Heart right ventricle (tissue), 16 donors: ENCODE measurements at regions of chr9 and their contacts with region 1.

Region 1: DNA sequence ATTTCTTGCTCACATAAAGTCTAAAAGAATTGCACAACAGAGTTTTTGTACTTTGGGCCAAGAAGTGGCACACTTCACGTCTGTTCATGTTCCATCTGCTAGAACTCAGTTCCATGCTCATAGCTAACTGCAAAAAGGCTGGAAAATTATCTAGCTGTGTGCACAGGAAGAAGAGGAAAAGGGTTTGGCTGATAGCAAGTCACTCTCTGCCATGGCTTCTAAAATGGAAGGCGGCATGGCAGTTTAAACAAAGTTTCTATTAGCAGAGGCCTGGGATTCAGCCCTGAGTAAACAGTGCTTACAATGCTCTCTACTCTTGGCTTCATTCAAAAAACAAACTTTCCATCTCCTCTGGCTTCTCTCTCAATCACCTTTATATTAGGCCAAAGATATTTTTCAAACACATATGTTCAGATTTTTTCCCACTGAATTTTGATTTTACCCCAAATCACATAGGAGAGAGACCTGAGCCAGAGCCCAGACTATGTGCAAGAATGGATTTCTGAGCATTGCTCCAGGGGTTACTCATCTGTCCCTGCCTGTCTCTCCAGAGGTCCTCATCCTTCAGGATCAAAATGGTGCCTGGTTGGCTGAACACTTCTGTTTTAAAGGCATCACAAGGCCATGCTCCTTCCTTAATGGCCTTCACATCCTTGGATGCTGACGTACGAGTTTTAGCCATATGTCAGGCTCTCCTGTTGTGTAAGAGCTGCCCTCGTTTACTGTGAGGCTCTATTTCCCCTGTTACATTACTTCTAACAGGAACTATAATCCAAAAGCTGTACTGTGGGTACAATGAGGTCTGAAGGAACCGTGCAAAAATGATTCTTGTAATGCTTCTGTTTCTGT is 226.6 kb downstream of the SAXO1 start:
- DNase-seq: no peak
- ATAC-seq: no peak
- H3K4me3 ChIP-seq: no peak overlapping the region
- H3K27ac ChIP-seq: no peak overlapping the region
- H3K4me1 ChIP-seq: no peaks in the 10 kb centered on the region
- H3K27me3 ChIP-seq: no peaks in the 10 kb centered on the region
- CTCF ChIP-seq: no peak

Region 2: GRCh38 chr9:18459958-18460584 is 346.4 kb before region 1 on chr9:
- intact Hi-C with region 1: loop called in 1 of 10 experiments (anchors 10 kb)
- DNase-seq: no peak
- ATAC-seq: peak in 2 of 8 donors; percentile 30 to 37
- H3K4me3 ChIP-seq: no peak overlapping the region
- H3K27ac ChIP-seq: no peak overlapping the region
- H3K4me1 ChIP-seq: no peaks in the 10 kb centered on the region
- H3K27me3 ChIP-seq: no peaks in the 10 kb centered on the region
- CTCF ChIP-seq: no peak